ENCODE measurements at regions of chr3 and their contacts with region 1.

Region 1: DNA sequence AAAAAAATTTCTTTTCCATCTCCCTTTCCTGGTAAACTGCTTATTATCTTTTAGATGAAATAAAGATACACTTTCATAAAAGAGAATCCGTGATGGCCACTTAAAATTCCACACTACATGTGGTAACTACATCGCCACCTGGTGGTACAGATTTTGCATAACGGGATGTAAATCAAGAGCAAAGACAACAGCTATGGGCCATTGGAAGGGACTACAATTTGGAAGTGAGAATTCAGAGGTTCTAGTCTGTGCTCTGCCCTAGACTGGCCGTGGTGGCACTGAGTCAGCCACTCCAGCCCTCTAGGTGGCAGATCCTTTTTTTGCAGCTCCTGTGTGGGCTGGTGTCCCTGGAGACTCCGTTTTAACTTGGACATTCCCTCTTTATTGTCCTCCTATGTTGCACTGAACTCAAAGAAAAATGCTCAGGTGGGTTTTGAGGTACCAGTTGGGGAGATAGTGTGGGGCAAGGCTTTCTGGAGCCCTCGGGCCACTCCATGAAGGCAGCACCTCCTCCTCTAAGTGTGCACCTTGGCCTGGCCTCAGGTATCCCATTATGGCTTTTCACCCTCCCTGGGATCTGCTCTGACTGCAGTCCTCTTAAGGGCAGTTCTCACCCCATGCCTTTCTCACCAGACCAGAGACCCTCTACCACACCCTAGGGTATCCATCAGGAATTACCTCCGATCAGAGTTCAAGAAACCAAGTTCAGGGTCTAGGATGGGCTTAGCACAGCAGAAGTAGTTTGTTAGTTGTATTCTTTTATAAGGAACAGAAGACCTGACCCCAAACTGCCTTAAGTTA is 54.9 kb downstream of the SPSB4 start:
- DNase-seq: peak; percentile 84
- H3K4me3 Mint-ChIP-seq: no peak overlapping the region
- H3K27ac Mint-ChIP-seq: no peak overlapping the region
- H3K4me1 Mint-ChIP-seq: no peaks in the 10 kb centered on the region
- H3K27me3 Mint-ChIP-seq: no peaks in the 10 kb centered on the region

Region 2: GRCh38 chr3:140863580-140864009 is 242.4 kb before region 1 on chr3:
- CTCF ChIA-PET with region 1: no interaction called
- intact Hi-C with region 1: no loop called
- DNase-seq: peak; percentile 73
- H3K4me3 Mint-ChIP-seq: no peak overlapping the region
- H3K27ac Mint-ChIP-seq: no peak overlapping the region
- H3K4me1 Mint-ChIP-seq: no peaks in the 10 kb centered on the region
- H3K27me3 Mint-ChIP-seq: peaks cover 2% of the 10 kb centered on the region

Region 3: GRCh38 chr3:141000027-141000663 is 105.9 kb before region 1 on chr3:
- CTCF ChIA-PET with region 1: interaction called, 8 read pairs
- intact Hi-C with region 1: loop called (anchors 1 kb)
- DNase-seq: peak; percentile 73
- H3K4me3 Mint-ChIP-seq: no peak overlapping the region
- H3K27ac Mint-ChIP-seq: no peak overlapping the region
- H3K4me1 Mint-ChIP-seq: peaks cover 4% of the 10 kb centered on the region
- H3K27me3 Mint-ChIP-seq: no peaks in the 10 kb centered on the region

Region 4: DNA sequence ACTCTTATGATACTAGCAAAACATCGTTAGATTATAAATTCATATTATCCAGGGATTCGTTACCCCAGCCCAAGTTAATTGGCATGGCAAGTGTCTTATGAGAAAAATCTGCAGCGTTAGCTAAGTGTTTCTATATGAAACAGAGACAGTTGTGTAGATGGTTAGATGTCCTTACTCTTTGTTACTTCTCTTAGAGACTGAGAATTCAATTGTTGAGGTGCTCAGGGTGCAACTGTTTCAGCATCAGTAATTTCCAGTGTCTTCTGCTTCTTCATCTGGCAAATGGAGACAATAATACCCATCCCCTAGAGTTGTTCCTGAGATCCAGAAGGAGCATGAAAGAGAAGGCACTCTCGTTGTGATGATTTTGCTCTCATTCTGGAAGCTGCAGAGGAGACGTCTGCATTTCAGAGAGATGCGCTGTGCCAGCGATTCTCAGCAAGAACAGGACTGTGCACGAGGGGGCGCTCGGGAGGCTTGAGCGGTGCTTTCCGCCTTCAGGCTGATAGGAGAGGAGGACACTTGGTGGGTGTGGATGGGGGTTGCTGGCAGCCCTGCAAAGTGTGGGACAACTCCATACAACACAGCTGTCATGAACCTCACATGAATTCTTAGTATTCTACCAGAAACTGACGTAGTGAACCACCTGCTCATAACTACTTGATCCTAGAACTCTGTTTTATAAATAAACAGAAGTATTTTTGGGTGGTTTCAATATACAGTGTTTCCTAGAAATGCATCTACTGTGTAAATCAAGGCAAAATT is 94.6 kb before region 1 on chr3:
- CTCF ChIA-PET with region 1: interaction called, 17 read pairs
- intact Hi-C with region 1: loop called (anchors 1 kb)
- DNase-seq: peak; percentile 91
- H3K4me3 Mint-ChIP-seq: no peak overlapping the region
- H3K27ac Mint-ChIP-seq: no peak overlapping the region
- H3K4me1 Mint-ChIP-seq: peaks cover 5% of the 10 kb centered on the region
- H3K27me3 Mint-ChIP-seq: peaks cover 12% of the 10 kb centered on the region

Region 5: DNA sequence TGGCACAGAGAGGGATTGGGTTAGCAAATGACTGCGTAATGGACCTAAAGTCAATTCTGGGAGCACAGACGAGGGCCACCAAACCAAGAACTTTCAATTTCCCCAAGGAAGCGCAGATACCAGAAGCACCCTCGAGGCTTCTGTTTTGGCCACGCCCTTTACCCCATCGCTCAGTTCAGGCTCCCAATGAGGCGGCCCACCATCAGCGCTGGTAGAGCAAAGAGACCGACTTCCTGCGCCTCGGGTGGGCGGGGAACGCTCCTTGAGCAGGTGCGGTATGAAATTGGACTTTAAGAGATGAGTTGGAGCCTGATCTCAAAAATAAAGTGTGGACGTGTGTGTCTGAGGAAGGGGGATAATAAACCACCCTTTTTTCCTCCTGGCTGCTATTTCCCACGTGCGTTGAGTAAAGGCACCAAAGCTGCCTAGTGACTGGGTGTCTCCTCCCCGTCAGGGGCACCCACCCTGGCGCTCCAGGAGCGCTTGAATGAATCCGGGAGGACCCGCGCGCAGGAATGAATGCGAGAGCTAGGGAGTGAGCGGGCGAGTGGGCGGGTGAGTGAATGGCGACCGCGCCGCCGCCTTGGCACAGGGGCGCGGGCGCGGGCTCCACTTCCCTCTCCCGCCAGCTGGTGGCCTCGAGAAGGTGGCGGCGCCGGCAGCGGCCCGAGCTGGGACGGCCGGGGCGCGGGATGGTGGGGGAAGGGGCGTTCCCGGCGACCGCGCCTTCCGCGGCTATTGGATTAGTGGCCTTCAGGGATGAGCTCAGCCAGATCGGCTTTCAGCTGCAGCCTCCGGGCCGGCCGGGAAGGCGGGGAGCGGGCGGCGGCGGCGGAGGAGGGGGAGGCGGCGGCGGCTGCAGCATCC is 55.2 kb before region 1 on chr3 and contains the start of gene SPSB4:
- CTCF ChIA-PET with region 1: interaction called, 5 read pairs
- intact Hi-C with region 1: loop called (anchors 1 kb)
- DNase-seq: peak; percentile 28
- H3K4me3 Mint-ChIP-seq: peak within 1 kb of the TSS; percentile 58
- H3K27ac Mint-ChIP-seq: no peak within 1 kb of the TSS
- H3K4me1 Mint-ChIP-seq: peaks cover 8% of the 10 kb centered on the region
- H3K27me3 Mint-ChIP-seq: peaks cover 39% of the 10 kb centered on the region
- total RNA-seq, gene SPSB4: not detected